Breast epithelium (tissue), 4 donors: ENCODE measurements at regions of chr13 and their contacts with region 1.

Region 1: GRCh38 chr13:109000207-109000606 is 370.8 kb downstream of the MYO16 start:
- DNase-seq: no peak
- H3K4me3 ChIP-seq: no peak overlapping the region
- H3K27ac ChIP-seq: no peak overlapping the region
- H3K4me1 ChIP-seq: no peaks in the 10 kb centered on the region
- H3K27me3 ChIP-seq: no peaks in the 10 kb centered on the region
- CTCF ChIP-seq: no peak
- POLR2A ChIP-seq: no peak

Region 2: GRCh38 chr13:109043636-109044035 is 43.4 kb after region 1 on chr13:
- intact Hi-C with region 1: loop called (anchors 2 kb)
- DNase-seq: no peak
- H3K4me3 ChIP-seq: no peak overlapping the region
- H3K27ac ChIP-seq: no peak overlapping the region
- H3K4me1 ChIP-seq: no peaks in the 10 kb centered on the region
- H3K27me3 ChIP-seq: no peaks in the 10 kb centered on the region
- CTCF ChIP-seq: no peak
- POLR2A ChIP-seq: no peak